ENCODE measurements at regions of chr17 and their contacts with region 1.

Region 1: DNA sequence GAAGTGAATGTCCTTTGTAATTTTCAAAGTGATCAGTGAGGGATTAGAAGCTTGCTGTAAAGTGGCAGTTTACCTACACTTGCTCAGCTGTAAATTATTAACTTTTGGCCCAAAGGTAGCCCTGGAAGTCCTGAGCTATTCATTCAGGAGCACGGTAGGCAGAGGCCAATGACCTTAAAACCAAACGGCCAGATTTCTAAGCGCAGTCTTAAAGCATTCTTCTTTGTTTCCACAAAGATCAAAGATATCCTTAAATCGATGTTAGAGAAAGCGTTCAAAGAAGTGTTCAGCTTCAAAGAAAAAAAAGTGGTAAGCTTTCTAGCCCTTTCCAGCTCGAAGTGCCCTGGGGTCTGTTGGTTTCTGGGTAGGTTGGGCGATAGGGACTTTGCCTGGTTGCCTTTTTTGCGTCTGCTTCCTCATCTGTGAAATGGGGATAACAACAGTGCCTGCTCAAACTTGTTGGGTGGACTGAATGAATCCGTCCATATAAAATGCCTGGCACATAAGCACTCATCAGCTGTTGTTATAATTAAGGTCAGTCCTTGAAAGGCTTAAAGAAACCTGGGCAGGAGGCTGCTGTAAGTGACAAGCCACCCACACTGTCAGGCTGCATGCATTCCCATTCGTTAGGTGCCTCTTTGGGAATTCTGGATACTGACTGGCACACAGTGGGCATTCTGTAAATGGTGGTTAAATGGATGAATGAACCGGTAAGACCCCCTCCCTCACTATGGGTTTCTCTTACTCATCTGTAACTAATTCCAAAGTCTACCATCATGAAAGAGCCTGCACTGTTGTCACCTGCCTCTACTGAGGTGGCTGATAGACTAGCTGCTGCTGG is 113.2 kb downstream of the PRKCA start:
- DNase-seq: no peak
- ATAC-seq: peak; percentile 88

Region 2: DNA sequence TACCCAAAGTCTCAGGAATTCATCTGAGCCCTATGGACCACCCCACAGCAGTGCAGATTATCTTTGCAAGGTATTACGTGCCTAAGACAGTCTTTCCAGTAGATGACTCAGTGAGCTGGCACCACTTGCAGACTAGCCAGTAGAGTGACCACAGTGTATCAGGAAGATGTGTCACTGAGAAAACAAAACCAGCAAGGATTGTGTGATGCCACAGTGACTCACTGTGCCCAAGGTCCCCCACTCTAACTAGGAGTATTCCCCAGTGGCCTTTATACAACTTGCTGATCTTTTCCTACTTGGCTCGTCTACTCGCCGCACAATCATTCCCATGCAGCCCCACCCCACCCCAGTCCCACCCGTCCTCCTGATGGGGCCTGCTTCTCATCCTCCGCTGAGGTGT is 139.9 kb before region 1 on chr17:
- intact Hi-C with region 1: no loop called
- DNase-seq: no peak
- ATAC-seq: no peak

Region 3: GRCh38 chr17:66310528-66311148 is 104.9 kb before region 1 on chr17:
- intact Hi-C with region 1: loop called in 1 of 2 experiments (anchors 10 kb)
- DNase-seq: no peak
- ATAC-seq: no peak

Region 4: DNA sequence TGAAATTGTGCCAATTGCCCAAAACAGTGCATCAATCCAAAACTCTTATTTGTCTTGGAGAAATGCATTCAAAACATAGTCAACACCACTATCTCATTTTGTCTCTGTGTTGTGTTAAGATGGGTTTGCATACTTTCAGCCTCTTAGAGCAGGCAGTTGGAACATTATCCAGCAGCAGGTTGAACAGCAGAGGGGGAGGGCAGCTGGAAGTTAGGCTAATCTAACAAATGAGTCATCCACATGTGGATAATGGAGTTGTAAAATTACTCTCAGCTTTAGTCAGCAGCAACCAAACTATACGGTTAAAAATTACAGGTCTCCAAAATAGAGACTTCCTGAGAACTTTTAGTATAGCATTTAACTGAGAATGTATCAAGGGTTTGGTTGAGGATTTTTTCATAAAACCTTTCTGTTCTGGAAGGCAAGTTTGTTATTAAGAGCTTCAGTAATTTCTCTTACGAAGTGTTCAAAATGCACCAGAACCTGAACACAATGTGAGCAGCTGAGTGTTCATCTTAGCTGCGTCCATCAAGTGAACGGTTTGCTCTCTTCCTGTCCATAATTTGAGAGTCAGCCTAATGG is 66.9 kb before region 1 on chr17:
- intact Hi-C with region 1: no loop called
- DNase-seq: peak; percentile 52 to 80
- ATAC-seq: peak; percentile 76